Activated T-helper 2 cell treated with anti-CD3 and anti-CD28 coated beads, Interferon-gamma antibody, Interleukin-2, Interleukin-4, amounts not matched to agents 10 μg/mL and 5 μg/mL and 100 μg/mL, durations not matched to agents 14 hours and 24 hours and 36 hours (primary cell): ENCODE measurements at regions of chr17 and their contacts with region 1.

Region 1: GRCh38 chr17:48593840-48594537 is 410 bp upstream of the HOXB5 start:
- DNase-seq: peak; percentile 78
- H3K4me3 Mint-ChIP-seq: peak overlapping the region; percentile 76
- H3K27ac Mint-ChIP-seq: no peak overlapping the region
- H3K4me1 Mint-ChIP-seq: peaks cover 43% of the 10 kb centered on the region
- H3K27me3 Mint-ChIP-seq: peaks cover 86% of the 10 kb centered on the region

Region 2: GRCh38 chr17:48335858-48336500 is 258.0 kb before region 1 on chr17:
- intact Hi-C with region 1: loop called (anchors 1 kb)
- DNase-seq: no peak
- H3K4me3 Mint-ChIP-seq: no peak overlapping the region
- H3K27ac Mint-ChIP-seq: no peak overlapping the region
- H3K4me1 Mint-ChIP-seq: peaks cover 23% of the 10 kb centered on the region
- H3K27me3 Mint-ChIP-seq: no peaks in the 10 kb centered on the region

Region 3: DNA sequence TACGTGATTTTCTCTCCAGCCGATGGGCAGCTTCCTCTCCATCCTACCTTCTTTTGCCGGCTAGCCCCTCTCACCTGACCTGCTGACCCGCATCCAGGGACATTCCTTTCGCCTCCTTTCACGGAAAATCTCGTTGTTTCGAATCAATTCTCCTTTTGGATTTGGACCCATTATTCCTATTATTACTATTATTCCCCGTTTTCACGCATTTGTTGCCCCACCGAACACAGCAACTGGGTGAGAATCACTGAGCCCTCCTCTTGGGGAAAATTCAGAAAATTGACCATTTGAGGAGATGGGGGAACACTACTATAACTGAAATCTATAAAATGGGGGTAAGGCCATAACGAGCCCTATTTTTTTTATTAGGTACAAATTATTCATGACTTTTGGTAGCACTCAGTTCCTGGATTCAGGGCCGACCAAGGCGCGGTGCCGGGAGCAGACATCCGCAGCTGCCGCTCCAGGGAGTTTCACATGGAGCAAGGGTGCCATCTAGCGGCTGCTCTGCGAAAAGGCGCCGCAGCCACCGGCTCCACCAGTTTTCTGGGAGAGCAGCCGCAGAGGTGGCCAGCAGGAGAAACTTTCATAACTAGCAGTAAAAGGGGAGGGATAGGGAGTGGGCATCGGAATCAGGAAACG is 24.4 kb after region 1 on chr17:
- intact Hi-C with region 1: loop called (anchors 1 kb)
- DNase-seq: peak; percentile 77
- H3K4me3 Mint-ChIP-seq: no peak overlapping the region
- H3K27ac Mint-ChIP-seq: peak overlapping the region; percentile 14
- H3K4me1 Mint-ChIP-seq: peaks cover 27% of the 10 kb centered on the region
- H3K27me3 Mint-ChIP-seq: peaks cover 87% of the 10 kb centered on the region